Naive thymus-derived CD4-positive, alpha-beta T cell (primary cell): ENCODE measurements at regions of chr10 and their contacts with region 1.

Region 1: DNA sequence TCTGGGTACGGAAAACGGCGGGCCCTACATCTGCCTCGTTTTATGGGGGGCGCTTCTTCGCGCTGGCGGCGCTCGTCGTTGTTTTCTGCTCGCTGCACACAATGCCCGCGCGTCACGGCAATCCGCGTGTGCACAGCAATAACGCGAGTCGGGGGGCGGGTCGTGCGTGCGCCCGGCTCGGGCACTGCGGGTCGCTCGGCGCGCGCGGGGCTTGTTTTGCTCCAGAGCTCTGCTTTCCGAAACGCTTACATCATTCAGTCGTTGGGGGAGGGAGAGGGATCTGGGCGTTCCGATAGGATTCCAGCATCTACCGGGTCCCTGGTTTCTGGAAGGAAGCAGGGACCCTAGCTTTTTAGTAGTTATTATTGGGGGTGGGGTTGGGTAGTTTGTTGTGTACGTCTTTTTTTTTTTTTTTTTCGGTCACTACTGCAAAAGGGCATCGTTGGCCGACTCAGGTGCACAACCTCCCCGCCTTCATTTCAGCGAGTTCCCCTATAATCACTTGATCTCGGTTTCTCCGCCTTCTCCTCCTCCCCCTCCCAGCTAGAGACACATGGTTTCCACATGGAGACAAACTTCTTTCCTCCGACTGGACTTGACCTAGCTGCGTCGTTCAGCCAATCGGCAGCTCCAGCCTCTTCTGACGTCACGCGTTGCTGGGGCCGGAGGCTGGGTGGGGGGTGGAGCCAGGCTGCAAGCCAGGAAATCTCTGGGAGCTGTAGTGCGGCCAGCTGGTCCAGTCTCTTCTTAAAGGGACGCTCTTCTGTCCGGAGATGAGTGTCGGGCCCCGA is 3.5 kb downstream of the MXI1 start:
- DNase-seq: peak; percentile 81 to 92 (median 89)
- ATAC-seq: peak; percentile 76
- H3K4me3 ChIP-seq: peak overlapping the region; percentile 69
- H3K4me3 Mint-ChIP-seq: peak overlapping the region; percentile 93 to 99 (median 97)
- H3K27ac ChIP-seq: peak overlapping the region; percentile 95
- H3K27ac Mint-ChIP-seq: peak overlapping the region; percentile 95 to 99 (median 98)
- H3K4me1 ChIP-seq: peaks cover 21 to 46% of the 10 kb centered on the region in 2 donors
- H3K4me1 Mint-ChIP-seq: peaks cover 34 to 64% (median 57%) of the 10 kb centered on the region in 7 donors
- H3K27me3 ChIP-seq: no peaks in the 10 kb centered on the region
- H3K27me3 Mint-ChIP-seq: peaks cover 0 to 10% (median 7%) of the 10 kb centered on the region in 5 donors

Region 2: GRCh38 chr10:109922976-109923921 is 287.6 kb before region 1 on chr10 and contains the start of gene XPNPEP1:
- CTCF ChIA-PET with region 1: no interaction called
- POLR2A ChIA-PET with region 1: no interaction called
- intact Hi-C with region 1: loop called in 1 of 2 experiments (anchors 2 kb)
- DNase-seq: peak; percentile 55 to 90 (median 66)
- ATAC-seq: peak; percentile 98
- H3K4me3 ChIP-seq: peak within 1 kb of the TSS; percentile 67
- H3K4me3 Mint-ChIP-seq: peak within 1 kb of the TSS; percentile 78 to 94 (median 90)
- H3K27ac ChIP-seq: peak within 1 kb of the TSS; percentile 83
- H3K27ac Mint-ChIP-seq: peak within 1 kb of the TSS; percentile 75 to 95 (median 89)
- H3K4me1 ChIP-seq: peaks cover 30 to 39% of the 10 kb centered on the region in 2 donors
- H3K4me1 Mint-ChIP-seq: peaks cover 36 to 58% (median 54%) of the 10 kb centered on the region in 7 donors
- H3K27me3 ChIP-seq: no peaks in the 10 kb centered on the region
- H3K27me3 Mint-ChIP-seq: peaks cover 0 to 16% (median 0%) of the 10 kb centered on the region in 5 donors
- total RNA-seq, gene XPNPEP1: 44.1 to 100 (median 60.7) TPM

Region 3: DNA sequence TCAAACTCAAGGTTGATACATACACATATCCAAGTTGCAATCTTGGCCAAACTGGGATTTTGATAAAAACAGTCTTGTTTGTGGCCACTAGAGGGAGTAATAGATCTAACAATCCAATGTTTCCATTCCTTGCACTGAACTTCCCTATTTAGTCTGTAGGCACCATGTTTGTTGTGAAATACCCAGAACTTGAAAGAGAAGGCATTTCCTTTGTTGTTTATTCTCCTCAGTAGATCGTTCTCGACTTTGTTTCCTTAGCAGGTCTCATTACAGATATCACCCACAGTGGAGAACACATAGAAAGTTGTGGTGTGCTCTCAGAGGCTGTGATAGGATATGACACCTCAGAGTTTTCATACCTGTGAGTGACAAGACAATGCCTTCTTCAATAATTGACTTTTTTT is 73.7 kb before region 1 on chr10:
- CTCF ChIA-PET with region 1: interaction called, 13 read pairs
- POLR2A ChIA-PET with region 1: interaction called, 107 read pairs
- intact Hi-C with region 1: loop called (anchors 1 kb)
- DNase-seq: peak in 7 of 9 donors; percentile 48 to 67 (median 64)
- ATAC-seq: peak; percentile 85
- H3K4me3 ChIP-seq: no peak overlapping the region
- H3K4me3 Mint-ChIP-seq: peak overlapping the region in 1 of 10 donors; percentile 19
- H3K27ac ChIP-seq: peak overlapping the region; percentile 4
- H3K27ac Mint-ChIP-seq: peak overlapping the region; percentile 2 to 83 (median 45)
- H3K4me1 ChIP-seq: peaks cover 14% of the 10 kb centered on the region in 2 donors
- H3K4me1 Mint-ChIP-seq: peaks cover 13 to 38% (median 29%) of the 10 kb centered on the region in 7 donors
- H3K27me3 ChIP-seq: no peaks in the 10 kb centered on the region
- H3K27me3 Mint-ChIP-seq: no peaks in the 10 kb centered on the region

Region 4: GRCh38 chr10:110170142-110170971 is 40.5 kb before region 1 on chr10:
- CTCF ChIA-PET with region 1: interaction called, 3 read pairs
- POLR2A ChIA-PET with region 1: interaction called, 4 read pairs
- intact Hi-C with region 1: loop called in 1 of 2 experiments (anchors 5 kb)
- DNase-seq: no peak
- ATAC-seq: peak; percentile 24
- H3K4me3 ChIP-seq: no peak overlapping the region
- H3K4me3 Mint-ChIP-seq: peak overlapping the region in 1 of 10 donors; percentile 15
- H3K27ac ChIP-seq: no peak overlapping the region
- H3K27ac Mint-ChIP-seq: no peak overlapping the region
- H3K4me1 ChIP-seq: peaks cover 3 to 11% of the 10 kb centered on the region in 2 donors
- H3K4me1 Mint-ChIP-seq: peaks cover 22 to 32% (median 29%) of the 10 kb centered on the region in 7 donors
- H3K27me3 ChIP-seq: peaks cover 0 to 8% of the 10 kb centered on the region in 2 donors
- H3K27me3 Mint-ChIP-seq: peaks cover 72 to 89% (median 75%) of the 10 kb centered on the region in 5 donors

Region 5: DNA sequence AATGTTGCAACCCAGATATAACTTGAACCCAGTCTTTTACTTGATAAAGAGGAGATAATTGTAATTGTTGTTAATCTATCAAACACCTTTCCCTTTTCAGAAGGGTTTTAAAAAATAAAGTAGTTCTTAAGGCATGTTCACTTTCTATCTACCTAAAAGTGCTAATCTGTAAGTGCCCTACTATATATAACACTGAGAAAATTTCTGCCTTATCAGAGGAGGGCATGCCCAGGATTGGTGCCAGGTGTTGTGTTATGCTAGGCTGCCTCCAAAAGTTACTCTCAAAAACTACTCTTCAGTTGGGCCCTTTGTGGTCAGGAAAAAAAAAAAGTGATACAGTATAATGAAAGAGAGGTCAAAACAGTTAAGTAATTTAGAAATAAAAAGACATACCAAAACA is 57.6 kb after region 1 on chr10:
- CTCF ChIA-PET with region 1: interaction called, 4 read pairs
- POLR2A ChIA-PET with region 1: interaction called, 26 read pairs
- intact Hi-C with region 1: no loop called
- DNase-seq: no peak
- ATAC-seq: no peak
- H3K4me3 ChIP-seq: no peak overlapping the region
- H3K4me3 Mint-ChIP-seq: peak overlapping the region in 8 of 10 donors; percentile 43 to 87 (median 64)
- H3K27ac ChIP-seq: no peak overlapping the region
- H3K27ac Mint-ChIP-seq: peak overlapping the region in 8 of 9 donors; percentile 57 to 91 (median 83)
- H3K4me1 ChIP-seq: peaks cover 0 to 12% of the 10 kb centered on the region in 2 donors
- H3K4me1 Mint-ChIP-seq: peaks cover 19 to 68% (median 47%) of the 10 kb centered on the region in 7 donors
- H3K27me3 ChIP-seq: no peaks in the 10 kb centered on the region
- H3K27me3 Mint-ChIP-seq: peaks cover 0 to 35% (median 0%) of the 10 kb centered on the region in 5 donors

Region 6: GRCh38 chr10:110304780-110305421 is 94.0 kb after region 1 on chr10 and contains the start of gene SMNDC1:
- CTCF ChIA-PET with region 1: interaction called, 7 read pairs
- POLR2A ChIA-PET with region 1: interaction called, 68 read pairs
- intact Hi-C with region 1: loop called (anchors 1 kb)
- DNase-seq: peak; percentile 93 to 97 (median 96)
- ATAC-seq: peak; percentile 94
- H3K4me3 ChIP-seq: peak within 1 kb of the TSS; percentile 91
- H3K4me3 Mint-ChIP-seq: peak within 1 kb of the TSS; percentile 94 to 99 (median 98)
- H3K27ac ChIP-seq: peak within 1 kb of the TSS; percentile 89
- H3K27ac Mint-ChIP-seq: peak within 1 kb of the TSS; percentile 97 to 100 (median 100)
- H3K4me1 ChIP-seq: peaks cover 32 to 38% of the 10 kb centered on the region in 2 donors
- H3K4me1 Mint-ChIP-seq: peaks cover 26 to 61% (median 55%) of the 10 kb centered on the region in 7 donors
- H3K27me3 ChIP-seq: no peaks in the 10 kb centered on the region
- H3K27me3 Mint-ChIP-seq: no peaks in the 10 kb centered on the region
- total RNA-seq, gene SMNDC1: 34.4 to 43.1 (median 40.1) TPM

Region 7: DNA sequence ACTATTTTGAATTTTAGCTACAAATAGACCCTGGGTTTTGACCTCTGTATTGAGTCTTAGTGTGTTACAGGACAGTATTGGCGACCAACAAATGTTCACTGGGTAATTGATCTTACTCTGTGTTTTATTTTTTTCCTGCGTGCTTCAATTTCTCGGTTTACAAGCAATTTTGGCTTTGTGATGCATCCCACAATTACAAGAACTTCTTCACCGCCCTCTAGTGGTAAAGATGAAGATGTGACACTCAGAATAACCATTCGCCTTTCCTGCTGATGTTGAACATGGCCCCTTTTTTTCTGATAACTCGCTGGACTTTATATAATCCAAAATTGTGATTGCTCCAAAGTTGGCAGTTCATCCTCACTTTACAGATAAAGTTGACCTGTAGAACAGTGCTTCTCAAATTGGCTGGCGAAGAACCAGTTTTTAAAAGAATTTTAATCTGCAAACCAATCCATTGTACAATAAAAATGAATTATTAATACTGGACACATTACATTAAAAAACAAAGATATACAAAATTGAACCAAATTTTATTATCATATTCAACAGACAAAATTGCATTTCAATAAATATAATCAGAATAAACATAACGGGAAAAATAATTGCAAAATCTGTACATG is 336.4 kb after region 1 on chr10:
- CTCF ChIA-PET with region 1: no interaction called
- POLR2A ChIA-PET with region 1: no interaction called
- intact Hi-C with region 1: loop called in 1 of 2 experiments (anchors 5 kb)
- DNase-seq: peak in 7 of 9 donors; percentile 40 to 75 (median 68)
- ATAC-seq: peak; percentile 85
- H3K4me3 ChIP-seq: no peak overlapping the region
- H3K4me3 Mint-ChIP-seq: peak overlapping the region in 1 of 10 donors; percentile 2
- H3K27ac ChIP-seq: no peak overlapping the region
- H3K27ac Mint-ChIP-seq: peak overlapping the region in 2 of 9 donors; percentile 3 to 6
- H3K4me1 ChIP-seq: peaks cover 0 to 5% of the 10 kb centered on the region in 2 donors
- H3K4me1 Mint-ChIP-seq: peaks cover 3 to 16% (median 5%) of the 10 kb centered on the region in 7 donors
- H3K27me3 ChIP-seq: no peaks in the 10 kb centered on the region
- H3K27me3 Mint-ChIP-seq: peaks cover 0 to 39% (median 11%) of the 10 kb centered on the region in 5 donors